Activated CD4-positive, alpha-beta memory T cell treated with anti-CD3 and anti-CD28 coated beads for 36 hours (primary cell): ENCODE measurements at regions of chr12 and their contacts with region 1.

Region 1: DNA sequence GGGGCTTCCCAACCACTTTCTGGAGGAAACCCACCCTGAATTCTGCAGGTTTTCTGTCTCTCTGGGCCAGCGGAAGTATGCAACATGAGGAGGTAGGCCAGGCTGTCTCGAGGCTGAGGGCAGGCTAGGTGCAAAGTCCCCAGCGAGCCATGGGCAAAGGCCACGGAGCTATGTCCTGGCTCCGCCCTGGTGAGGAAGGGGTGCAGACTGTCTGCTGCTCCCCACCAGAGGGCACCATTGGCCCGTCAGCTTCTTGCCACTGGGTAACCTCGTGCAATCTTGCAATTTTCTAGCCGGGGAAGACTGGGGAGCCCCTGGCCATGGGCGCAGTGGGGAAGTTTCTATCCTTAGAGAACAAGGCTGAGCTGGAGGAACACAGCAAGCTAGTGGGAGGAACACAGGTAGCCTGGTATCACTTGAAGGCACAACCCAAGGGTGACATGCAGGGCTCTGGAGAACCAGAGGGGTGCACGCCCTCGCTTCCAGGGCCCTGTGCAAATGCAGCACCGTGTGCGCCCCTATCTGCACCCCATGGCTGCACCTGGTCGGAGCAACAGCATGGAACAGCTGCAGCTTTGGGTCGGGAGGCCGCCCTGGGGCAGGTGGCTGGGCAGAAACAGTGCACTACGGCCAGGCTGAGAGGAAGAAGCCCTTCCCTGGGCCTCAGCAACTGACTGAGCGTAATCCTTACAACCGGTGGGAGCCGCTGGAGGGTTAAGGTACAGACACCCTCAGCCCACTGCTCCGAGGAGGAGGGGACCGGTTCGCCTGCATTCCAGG is 27.6 kb upstream of the RPLP0 start:
- DNase-seq: peak; percentile 94
- H3K4me3 Mint-ChIP-seq: peak overlapping the region; percentile 3
- H3K27ac Mint-ChIP-seq: peak overlapping the region; percentile 93
- H3K4me1 Mint-ChIP-seq: peaks cover 79% of the 10 kb centered on the region
- H3K27me3 Mint-ChIP-seq: no peaks in the 10 kb centered on the region

Region 2: GRCh38 chr12:119020406-119021360 is 1207.8 kb before region 1 on chr12:
- CTCF ChIA-PET with region 1: no interaction called
- POLR2A ChIA-PET with region 1: no interaction called
- intact Hi-C with region 1: no loop called
- DNase-seq: peak; percentile 24
- H3K4me3 Mint-ChIP-seq: no peak overlapping the region
- H3K27ac Mint-ChIP-seq: no peak overlapping the region
- H3K4me1 Mint-ChIP-seq: no peaks in the 10 kb centered on the region
- H3K27me3 Mint-ChIP-seq: no peaks in the 10 kb centered on the region

Region 3: GRCh38 chr12:120194534-120195395 is 33.7 kb before region 1 on chr12 and contains the start of gene GCN1:
- CTCF ChIA-PET with region 1: interaction called, 7 read pairs
- POLR2A ChIA-PET with region 1: interaction called, 65 read pairs
- intact Hi-C with region 1: no loop called
- DNase-seq: peak; percentile 91
- H3K4me3 Mint-ChIP-seq: peak within 1 kb of the TSS; percentile 91
- H3K27ac Mint-ChIP-seq: peak within 1 kb of the TSS; percentile 98
- H3K4me1 Mint-ChIP-seq: peaks cover 51% of the 10 kb centered on the region
- H3K27me3 Mint-ChIP-seq: no peaks in the 10 kb centered on the region
- total RNA-seq, gene GCN1: 121 TPM

Region 4: GRCh38 chr12:120211904-120212283 is 16.6 kb before region 1 on chr12:
- CTCF ChIA-PET with region 1: interaction called, 33 read pairs
- POLR2A ChIA-PET with region 1: no interaction called
- intact Hi-C with region 1: no loop called
- DNase-seq: no peak
- H3K4me3 Mint-ChIP-seq: no peak overlapping the region
- H3K27ac Mint-ChIP-seq: no peak overlapping the region
- H3K4me1 Mint-ChIP-seq: no peaks in the 10 kb centered on the region
- H3K27me3 Mint-ChIP-seq: no peaks in the 10 kb centered on the region

Region 5: DNA sequence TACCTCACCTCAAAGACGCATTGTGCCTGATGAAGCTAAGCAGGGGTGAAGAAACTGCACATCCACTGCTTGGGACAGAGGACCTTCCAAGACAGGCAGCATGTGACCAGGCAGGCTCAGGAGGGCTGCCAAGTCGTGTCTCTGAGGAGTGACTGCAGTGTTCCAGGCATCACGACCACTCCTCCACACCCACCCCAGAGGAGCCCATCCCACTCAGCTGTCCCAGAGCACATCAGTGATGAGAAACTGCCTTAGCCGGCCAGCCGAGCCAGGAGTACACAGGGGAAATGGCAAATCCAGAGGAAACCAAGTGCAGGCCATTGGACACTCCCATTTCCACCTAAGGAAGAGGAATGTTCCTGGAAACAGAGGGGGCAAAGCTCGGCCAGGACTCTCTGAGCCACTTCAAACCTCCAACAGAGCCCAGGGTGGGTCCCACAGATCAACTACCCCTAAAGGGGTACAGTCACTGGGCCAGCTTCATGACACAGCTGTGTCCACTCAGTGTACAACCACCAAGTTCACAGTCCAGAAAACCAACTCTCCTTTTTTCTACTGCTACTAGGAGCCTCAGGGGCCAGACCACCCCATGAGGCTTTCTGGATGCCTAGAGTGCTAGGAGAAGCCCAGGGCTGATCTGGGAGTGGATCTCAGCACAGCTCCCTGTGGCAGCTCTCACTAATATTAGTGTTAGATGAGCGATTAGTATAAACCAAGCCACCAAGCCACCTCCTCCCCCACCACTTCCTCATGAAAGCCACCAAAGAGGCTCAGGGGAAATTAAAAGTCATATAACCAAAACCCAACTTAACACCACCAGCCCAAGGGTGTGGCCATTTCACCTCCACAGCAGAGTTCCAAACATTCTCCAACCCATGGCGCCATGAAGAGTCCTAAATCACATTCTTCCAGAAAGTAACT is 21.7 kb after region 1 on chr12:
- CTCF ChIA-PET with region 1: interaction called, 192 read pairs
- POLR2A ChIA-PET with region 1: interaction called, 6 read pairs
- intact Hi-C with region 1: loop called (anchors 1 kb)
- DNase-seq: peak; percentile 64
- H3K4me3 Mint-ChIP-seq: peak overlapping the region; percentile 39
- H3K27ac Mint-ChIP-seq: peak overlapping the region; percentile 81
- H3K4me1 Mint-ChIP-seq: peaks cover 78% of the 10 kb centered on the region
- H3K27me3 Mint-ChIP-seq: no peaks in the 10 kb centered on the region

Region 6: GRCh38 chr12:120265473-120266179 is 37.1 kb after region 1 on chr12 and contains the start of gene PXN:
- CTCF ChIA-PET with region 1: interaction called, 614 read pairs
- POLR2A ChIA-PET with region 1: interaction called, 24 read pairs
- intact Hi-C with region 1: loop called (anchors 1 kb)
- DNase-seq: peak; percentile 92
- H3K4me3 Mint-ChIP-seq: peak within 1 kb of the TSS; percentile 80
- H3K27ac Mint-ChIP-seq: peak within 1 kb of the TSS; percentile 66
- H3K4me1 Mint-ChIP-seq: peaks cover 38% of the 10 kb centered on the region
- H3K27me3 Mint-ChIP-seq: no peaks in the 10 kb centered on the region
- total RNA-seq, gene PXN: 74.0 to 75.0 TPM

Region 7: DNA sequence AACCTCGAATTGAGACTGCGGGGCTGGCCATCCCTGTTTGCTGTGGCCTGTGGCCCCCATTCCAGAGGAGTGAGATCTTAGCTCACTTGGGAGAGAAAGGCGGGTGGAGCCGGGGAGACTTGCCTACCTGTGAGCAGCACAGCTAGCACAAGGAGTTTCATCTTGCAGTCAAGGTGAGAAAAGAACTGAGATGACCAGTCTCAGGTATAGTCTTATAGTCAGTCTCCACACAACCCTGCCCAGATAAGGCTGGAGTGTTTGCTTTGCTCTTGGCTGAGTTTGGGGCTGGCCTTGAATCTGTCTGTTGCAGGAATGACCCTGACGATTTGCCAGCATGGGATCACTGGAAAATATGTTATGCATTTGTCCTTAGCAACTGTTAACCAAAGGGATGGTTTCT is 99.1 kb after region 1 on chr12 and contains the start of gene PLA2G1B:
- CTCF ChIA-PET with region 1: interaction called, 10 read pairs
- POLR2A ChIA-PET with region 1: interaction called, 3 read pairs
- intact Hi-C with region 1: no loop called
- DNase-seq: no peak
- H3K4me3 Mint-ChIP-seq: no peak within 1 kb of the TSS
- H3K27ac Mint-ChIP-seq: no peak within 1 kb of the TSS
- H3K4me1 Mint-ChIP-seq: peaks cover 2% of the 10 kb centered on the region
- H3K27me3 Mint-ChIP-seq: peaks cover 2% of the 10 kb centered on the region
- total RNA-seq, gene PLA2G1B: not detected

Region 8: DNA sequence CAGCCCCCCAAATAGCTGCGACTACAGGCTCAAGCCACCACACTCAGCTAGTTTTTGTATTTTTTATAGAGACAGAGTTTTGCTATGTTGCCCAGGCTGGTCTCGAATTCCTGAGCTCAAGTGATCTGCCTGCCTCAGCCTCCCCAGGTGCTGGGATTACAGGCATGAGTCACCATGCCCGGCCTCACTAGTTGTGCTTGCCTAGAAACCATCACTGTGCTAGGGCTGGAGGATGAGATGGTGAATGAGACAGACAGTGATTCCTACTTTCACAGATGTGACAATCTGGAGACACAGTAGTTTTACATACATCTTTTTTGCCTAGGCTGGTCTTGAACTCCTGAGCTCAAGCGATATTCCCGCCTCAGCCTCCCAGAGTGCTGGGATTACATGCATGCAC is 147.9 kb after region 1 on chr12:
- CTCF ChIA-PET with region 1: no interaction called
- POLR2A ChIA-PET with region 1: no interaction called
- intact Hi-C with region 1: no loop called
- DNase-seq: no peak
- H3K4me3 Mint-ChIP-seq: no peak overlapping the region
- H3K27ac Mint-ChIP-seq: no peak overlapping the region
- H3K4me1 Mint-ChIP-seq: no peaks in the 10 kb centered on the region
- H3K27me3 Mint-ChIP-seq: peaks cover 38% of the 10 kb centered on the region